ENCODE measurements at regions of chr7 and their contacts with region 1.

Region 1: GRCh38 chr7:29921404-29922010 is 68.1 kb downstream of the SCRN1 start:
- DNase-seq: peak; percentile 61
- H3K4me3 Mint-ChIP-seq: no peak overlapping the region
- H3K27ac Mint-ChIP-seq: no peak overlapping the region
- H3K4me1 Mint-ChIP-seq: no peaks in the 10 kb centered on the region
- H3K27me3 Mint-ChIP-seq: no peaks in the 10 kb centered on the region

Region 2: GRCh38 chr7:29639881-29640595 is 281.5 kb before region 1 on chr7:
- CTCF ChIA-PET with region 1: interaction called, 7 read pairs
- intact Hi-C with region 1: loop called (anchors 1 kb)
- DNase-seq: no peak
- H3K4me3 Mint-ChIP-seq: no peak overlapping the region
- H3K27ac Mint-ChIP-seq: no peak overlapping the region
- H3K4me1 Mint-ChIP-seq: no peaks in the 10 kb centered on the region
- H3K27me3 Mint-ChIP-seq: no peaks in the 10 kb centered on the region

Region 3: GRCh38 chr7:29748286-29749108 is 173.0 kb before region 1 on chr7:
- CTCF ChIA-PET with region 1: interaction called, 9 read pairs
- intact Hi-C with region 1: loop called (anchors 1 kb)
- DNase-seq: no peak
- H3K4me3 Mint-ChIP-seq: no peak overlapping the region
- H3K27ac Mint-ChIP-seq: no peak overlapping the region
- H3K4me1 Mint-ChIP-seq: no peaks in the 10 kb centered on the region
- H3K27me3 Mint-ChIP-seq: no peaks in the 10 kb centered on the region

Region 4: DNA sequence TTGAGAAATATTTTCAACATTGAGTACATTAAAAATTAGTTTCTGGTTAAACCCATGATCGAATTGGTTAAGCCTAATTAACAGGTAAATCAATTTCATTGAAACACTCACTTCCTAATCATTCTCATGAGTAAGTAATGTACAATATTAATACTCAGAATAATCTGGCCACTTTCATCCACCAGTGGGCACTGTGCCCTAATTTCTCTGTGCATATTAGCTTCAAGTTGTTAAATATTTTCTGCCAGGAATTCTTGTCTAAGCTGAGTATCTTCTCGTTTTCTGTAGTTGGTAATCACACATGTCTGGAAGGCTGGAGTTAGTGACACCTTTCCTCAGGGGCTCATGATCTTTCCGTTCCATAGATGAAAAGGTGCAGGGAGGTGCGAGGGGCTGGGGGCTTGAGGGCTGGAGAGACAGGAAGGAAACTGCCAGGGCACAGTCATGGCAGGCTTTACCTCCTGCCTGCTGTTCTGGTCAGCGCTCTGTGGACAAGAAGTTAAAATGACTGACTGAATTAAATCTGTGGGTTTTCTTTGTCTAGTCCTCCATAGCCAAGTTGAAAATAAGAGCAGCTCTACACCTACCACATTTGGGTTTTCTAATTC is 43.3 kb before region 1 on chr7:
- CTCF ChIA-PET with region 1: interaction called, 8 read pairs
- intact Hi-C with region 1: loop called (anchors 1 kb)
- DNase-seq: peak; percentile 47
- H3K4me3 Mint-ChIP-seq: no peak overlapping the region
- H3K27ac Mint-ChIP-seq: no peak overlapping the region
- H3K4me1 Mint-ChIP-seq: peaks cover 6% of the 10 kb centered on the region
- H3K27me3 Mint-ChIP-seq: peaks cover 9% of the 10 kb centered on the region

Region 5: GRCh38 chr7:29935111-29935510 is 13.6 kb after region 1 on chr7:
- CTCF ChIA-PET with region 1: interaction called, 11 read pairs
- intact Hi-C with region 1: no loop called
- DNase-seq: no peak
- H3K4me3 Mint-ChIP-seq: no peak overlapping the region
- H3K27ac Mint-ChIP-seq: no peak overlapping the region
- H3K4me1 Mint-ChIP-seq: no peaks in the 10 kb centered on the region
- H3K27me3 Mint-ChIP-seq: peaks cover 2% of the 10 kb centered on the region

Region 6: DNA sequence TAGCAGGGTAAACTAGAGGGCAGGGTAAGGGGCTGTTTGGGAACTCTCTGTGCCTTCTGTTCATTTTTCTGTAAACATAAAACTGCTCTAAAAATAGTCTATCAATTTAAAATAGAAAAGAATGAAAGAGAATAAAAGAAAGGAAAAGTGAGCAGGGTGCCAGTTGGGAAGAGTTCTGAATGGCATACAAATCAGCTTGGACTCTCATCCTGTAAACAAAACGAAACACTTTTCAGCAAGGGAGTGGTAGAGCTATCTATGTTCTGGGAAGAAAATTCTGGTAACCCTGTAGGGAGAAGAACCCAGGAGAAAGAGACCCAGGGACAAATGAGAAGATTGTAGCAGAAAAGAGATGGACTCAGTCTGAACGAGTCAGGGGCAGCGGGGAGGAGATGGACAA is 43.5 kb after region 1 on chr7:
- CTCF ChIA-PET with region 1: no interaction called
- intact Hi-C with region 1: no loop called
- DNase-seq: no peak
- H3K4me3 Mint-ChIP-seq: no peak overlapping the region
- H3K27ac Mint-ChIP-seq: no peak overlapping the region
- H3K4me1 Mint-ChIP-seq: no peaks in the 10 kb centered on the region
- H3K27me3 Mint-ChIP-seq: no peaks in the 10 kb centered on the region

Region 7: DNA sequence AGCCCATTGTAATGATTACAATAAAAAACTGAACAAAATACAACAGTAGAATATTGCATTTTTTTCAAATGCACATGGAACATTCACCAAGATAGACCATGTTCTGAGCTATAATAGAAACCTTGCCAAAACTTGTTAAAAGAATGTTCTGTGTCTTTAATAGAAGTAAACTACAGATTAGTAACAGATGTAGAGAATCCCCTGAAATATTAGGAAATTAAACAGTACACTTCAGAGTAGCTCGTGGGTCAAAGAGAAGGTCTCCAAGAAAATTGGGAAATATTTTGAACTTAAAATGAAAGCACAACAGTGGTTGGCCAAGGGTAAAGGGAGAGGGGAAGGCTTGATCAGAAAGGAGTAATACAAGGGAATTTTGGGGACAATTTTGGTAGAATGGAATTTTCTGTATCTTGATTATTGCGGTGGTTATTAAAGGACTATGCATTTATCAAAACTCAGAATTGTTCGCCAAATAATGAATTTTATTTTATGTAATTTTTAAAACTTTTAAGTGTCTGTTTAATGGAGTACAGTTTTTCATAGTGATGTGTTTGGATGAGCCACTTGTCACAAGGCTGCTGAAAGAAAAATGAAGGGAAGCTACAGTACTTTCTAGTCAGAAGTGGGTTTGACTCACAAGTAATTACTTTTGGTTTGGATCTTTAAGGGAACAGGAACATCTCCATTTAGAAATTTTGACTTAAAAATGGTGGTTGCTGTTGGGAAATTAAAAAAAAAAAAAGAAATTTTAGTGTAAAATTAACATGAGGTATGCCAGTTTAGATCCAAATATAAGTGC is 116.9 kb after region 1 on chr7:
- CTCF ChIA-PET with region 1: no interaction called
- intact Hi-C with region 1: no loop called
- DNase-seq: no peak
- H3K4me3 Mint-ChIP-seq: no peak overlapping the region
- H3K27ac Mint-ChIP-seq: no peak overlapping the region
- H3K4me1 Mint-ChIP-seq: peaks cover 12% of the 10 kb centered on the region
- H3K27me3 Mint-ChIP-seq: no peaks in the 10 kb centered on the region